ENCODE measurements at regions of chr3 and their contacts with region 1.

Region 1: GRCh38 chr3:132722164-132723024 is at the start of gene NPHP3:
- DNase-seq: peak; percentile 87 to 95 (median 91)
- H3K4me3 ChIP-seq: peak within 1 kb of the TSS; percentile 44 to 81
- H3K4me3 Mint-ChIP-seq: peak within 1 kb of the TSS; percentile 90 to 96 (median 92)
- H3K27ac ChIP-seq: peak within 1 kb of the TSS; percentile 80
- H3K27ac Mint-ChIP-seq: peak within 1 kb of the TSS; percentile 79 to 94 (median 91)
- H3K4me1 ChIP-seq: peaks cover 30% of the 10 kb centered on the region
- H3K4me1 Mint-ChIP-seq: peaks cover 29 to 49% (median 41%) of the 10 kb centered on the region in 4 donors
- H3K27me3 ChIP-seq: no peaks in the 10 kb centered on the region
- H3K27me3 Mint-ChIP-seq: peaks cover 0 to 1% of the 10 kb centered on the region in 2 donors
- total RNA-seq, gene NPHP3: 68.0 to 72.9 TPM

Region 2: DNA sequence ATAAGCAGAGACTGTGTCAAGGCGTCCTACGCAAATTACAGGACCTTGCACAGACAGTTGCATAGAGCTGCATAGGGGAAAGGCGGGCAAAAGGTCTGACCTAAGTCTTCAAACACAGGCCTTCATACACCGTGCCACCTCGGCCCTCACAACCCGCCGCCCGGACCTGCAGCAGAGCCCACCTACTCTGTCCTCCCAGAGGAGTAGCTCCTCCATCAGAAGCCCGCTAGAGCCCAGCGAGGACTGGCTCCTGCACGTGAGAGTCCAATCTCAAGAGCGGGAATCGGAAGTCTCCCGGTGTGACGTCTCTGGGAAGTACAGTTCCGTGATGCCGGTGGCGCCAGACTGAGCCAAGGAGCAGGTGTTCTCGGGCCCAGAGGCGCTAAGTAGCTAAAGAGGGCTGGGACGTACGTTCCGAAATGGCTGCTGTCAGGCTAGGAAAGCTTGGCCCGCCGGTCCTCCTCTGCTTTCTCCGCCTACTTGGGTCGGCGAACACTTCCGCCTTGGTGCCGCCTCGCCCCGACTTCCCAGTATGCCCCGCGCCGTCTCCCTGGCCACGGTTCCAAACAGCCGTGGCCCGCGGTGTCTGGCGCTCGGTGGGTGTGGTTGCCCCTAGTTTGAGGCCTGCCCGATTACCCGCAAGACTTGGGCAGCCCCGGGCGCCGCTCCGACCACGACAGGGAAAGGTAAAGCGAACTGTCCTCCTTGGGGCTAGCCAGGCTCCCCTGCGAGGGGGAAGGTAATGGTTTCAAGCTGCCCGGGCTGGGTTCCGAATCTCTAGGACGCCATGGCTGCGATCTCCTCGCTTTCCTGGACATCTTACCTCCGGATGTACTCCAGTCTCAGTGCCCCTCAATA is 1695.8 kb before region 1 on chr3 and contains the starts of genes ASTE1 and NEK11:
- CTCF ChIA-PET with region 1: no interaction called
- POLR2A ChIA-PET with region 1: no interaction called
- intact Hi-C with region 1: loop called (anchors 2 kb)
- DNase-seq: peak; percentile 93 to 95 (median 94)
- H3K4me3 ChIP-seq: peak within 1 kb of the TSS; percentile 76 to 95
- H3K4me3 Mint-ChIP-seq: peak within 1 kb of the TSS; percentile 87 to 95 (median 94)
- H3K27ac ChIP-seq: peak within 1 kb of the TSS; percentile 90
- H3K27ac Mint-ChIP-seq: peak within 1 kb of the TSS; percentile 92 to 99 (median 98)
- H3K4me1 ChIP-seq: peaks cover 51% of the 10 kb centered on the region
- H3K4me1 Mint-ChIP-seq: peaks cover 39 to 60% (median 49%) of the 10 kb centered on the region in 4 donors
- H3K27me3 ChIP-seq: no peaks in the 10 kb centered on the region
- H3K27me3 Mint-ChIP-seq: no peaks in the 10 kb centered on the region
- total RNA-seq, gene ASTE1: 28.1 TPM
- total RNA-seq, gene NEK11: 5.3 to 6.2 TPM

Region 3: GRCh38 chr3:132343018-132343612 is 379.3 kb before region 1 on chr3:
- CTCF ChIA-PET with region 1: no interaction called
- POLR2A ChIA-PET with region 1: no interaction called
- intact Hi-C with region 1: no loop called
- DNase-seq: peak; percentile 10 to 45 (median 16)
- H3K4me3 ChIP-seq: no peak overlapping the region
- H3K4me3 Mint-ChIP-seq: peak overlapping the region in 2 of 8 donors; percentile 10 to 23
- H3K27ac ChIP-seq: no peak overlapping the region
- H3K27ac Mint-ChIP-seq: no peak overlapping the region
- H3K4me1 ChIP-seq: no peaks in the 10 kb centered on the region
- H3K4me1 Mint-ChIP-seq: peaks cover 0 to 3% (median 3%) of the 10 kb centered on the region in 4 donors
- H3K27me3 ChIP-seq: no peaks in the 10 kb centered on the region
- H3K27me3 Mint-ChIP-seq: peaks cover 4 to 7% of the 10 kb centered on the region in 2 donors

Region 4: DNA sequence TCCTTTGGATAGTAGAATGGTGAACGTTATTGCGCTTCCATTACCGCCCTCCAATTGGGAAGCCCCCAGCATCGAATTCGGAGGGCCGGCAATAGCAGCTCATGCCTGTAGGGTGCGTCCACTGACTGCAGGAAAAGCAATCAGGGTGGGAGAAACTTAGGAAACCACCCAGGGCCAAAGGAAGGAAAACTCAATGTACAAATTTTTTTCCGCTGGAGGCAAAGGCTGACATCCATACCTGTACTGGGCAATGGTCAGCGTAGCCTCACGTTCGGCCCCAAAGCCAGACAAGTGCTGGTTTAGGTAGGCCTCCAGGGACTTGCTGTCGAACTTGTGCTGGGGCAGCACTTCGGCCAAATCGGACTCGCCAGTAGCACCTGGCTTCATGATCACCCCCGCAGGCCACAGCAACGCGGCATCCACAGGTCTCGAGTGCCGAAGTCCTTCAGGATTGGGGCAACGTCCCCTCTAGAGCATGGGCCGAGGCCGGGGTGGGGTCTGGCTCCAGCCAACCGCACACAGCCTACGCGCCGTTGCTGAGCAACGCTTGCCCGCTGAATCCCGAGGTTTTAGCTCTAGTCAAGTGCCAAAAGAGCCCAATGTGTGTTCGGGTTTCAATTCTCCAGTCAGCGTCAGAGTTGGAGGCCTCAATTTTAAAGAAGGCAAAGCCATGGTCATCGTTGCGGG is 62.9 kb before region 1 on chr3 and contains the start of gene ACAD11:
- CTCF ChIA-PET with region 1: no interaction called
- POLR2A ChIA-PET with region 1: interaction called, 4 read pairs
- intact Hi-C with region 1: loop called (anchors 2 kb)
- DNase-seq: peak; percentile 11 to 48 (median 13)
- H3K4me3 ChIP-seq: peak within 1 kb of the TSS; percentile 78 to 99
- H3K4me3 Mint-ChIP-seq: peak within 1 kb of the TSS; percentile 96 to 99 (median 98)
- H3K27ac ChIP-seq: peak within 1 kb of the TSS; percentile 83
- H3K27ac Mint-ChIP-seq: peak within 1 kb of the TSS; percentile 95 to 98 (median 97)
- H3K4me1 ChIP-seq: peaks cover 53% of the 10 kb centered on the region
- H3K4me1 Mint-ChIP-seq: peaks cover 37 to 71% (median 48%) of the 10 kb centered on the region in 4 donors
- H3K27me3 ChIP-seq: no peaks in the 10 kb centered on the region
- H3K27me3 Mint-ChIP-seq: no peaks in the 10 kb centered on the region
- total RNA-seq, gene ACAD11: 21.6 to 26.9 TPM

Region 5: GRCh38 chr3:133448478-133449122 is 726.2 kb after region 1 on chr3:
- CTCF ChIA-PET with region 1: interaction called, 4 read pairs
- POLR2A ChIA-PET with region 1: no interaction called
- intact Hi-C with region 1: loop called (anchors 5 kb)
- DNase-seq: peak; percentile 22 to 56 (median 32)
- H3K4me3 ChIP-seq: no peak overlapping the region
- H3K4me3 Mint-ChIP-seq: peak overlapping the region in 7 of 8 donors; percentile 13 to 81 (median 60)
- H3K27ac ChIP-seq: no peak overlapping the region
- H3K27ac Mint-ChIP-seq: peak overlapping the region; percentile 57 to 96 (median 89)
- H3K4me1 ChIP-seq: peaks cover 21% of the 10 kb centered on the region
- H3K4me1 Mint-ChIP-seq: peaks cover 19 to 38% (median 27%) of the 10 kb centered on the region in 4 donors
- H3K27me3 ChIP-seq: no peaks in the 10 kb centered on the region
- H3K27me3 Mint-ChIP-seq: no peaks in the 10 kb centered on the region

Region 6: DNA sequence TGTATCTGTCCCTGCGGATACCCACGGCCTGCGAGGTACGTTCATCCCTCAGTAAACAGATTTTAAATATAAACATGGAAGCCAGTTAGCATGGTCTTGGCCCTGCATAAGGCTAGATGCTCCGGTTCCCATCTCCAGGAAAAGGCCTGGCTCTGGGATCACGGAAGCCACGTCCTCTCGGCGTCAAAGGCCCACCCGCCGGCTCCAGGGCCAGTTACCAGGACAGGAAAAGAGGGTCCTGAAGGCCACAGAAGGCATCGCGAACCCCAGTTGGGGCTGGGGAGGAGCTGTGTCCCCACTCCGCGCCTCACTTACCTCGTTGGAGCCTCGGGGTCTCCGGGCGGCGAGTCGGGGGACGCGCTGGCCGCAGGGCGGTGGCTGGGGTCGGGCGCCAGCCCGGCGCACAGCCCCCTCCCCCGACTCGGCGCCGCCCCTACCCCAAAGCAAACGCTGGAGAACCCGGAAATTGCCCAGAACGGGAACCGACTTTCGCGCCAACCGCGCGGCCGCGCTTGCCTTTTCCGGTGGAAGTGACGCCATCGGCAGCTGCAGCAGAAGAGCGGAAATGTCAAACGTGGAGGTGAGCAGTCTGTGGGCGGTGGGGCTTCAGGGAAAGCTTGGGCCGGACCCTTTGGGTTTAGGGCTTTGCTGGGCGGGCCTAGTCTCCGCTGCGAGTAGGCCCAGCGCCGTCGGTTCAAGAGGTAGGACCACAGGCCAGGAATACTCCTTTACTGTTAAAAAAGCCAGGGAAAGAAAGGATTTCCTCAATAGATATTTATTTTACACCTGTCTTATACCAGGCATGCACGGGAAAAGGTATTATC is 939.3 kb after region 1 on chr3 and contains the start of gene TOPBP1:
- CTCF ChIA-PET with region 1: no interaction called
- POLR2A ChIA-PET with region 1: no interaction called
- intact Hi-C with region 1: loop called (anchors 2 kb)
- DNase-seq: peak; percentile 81 to 90 (median 85)
- H3K4me3 ChIP-seq: peak within 1 kb of the TSS; percentile 78 to 99
- H3K4me3 Mint-ChIP-seq: peak within 1 kb of the TSS; percentile 98 to 99 (median 98)
- H3K27ac ChIP-seq: peak within 1 kb of the TSS; percentile 81
- H3K27ac Mint-ChIP-seq: peak within 1 kb of the TSS; percentile 98 to 99 (median 99)
- H3K4me1 ChIP-seq: peaks cover 32% of the 10 kb centered on the region
- H3K4me1 Mint-ChIP-seq: peaks cover 29 to 52% (median 40%) of the 10 kb centered on the region in 4 donors
- H3K27me3 ChIP-seq: no peaks in the 10 kb centered on the region
- H3K27me3 Mint-ChIP-seq: no peaks in the 10 kb centered on the region
- total RNA-seq, gene TOPBP1: 42.0 to 43.2 TPM

Region 7: DNA sequence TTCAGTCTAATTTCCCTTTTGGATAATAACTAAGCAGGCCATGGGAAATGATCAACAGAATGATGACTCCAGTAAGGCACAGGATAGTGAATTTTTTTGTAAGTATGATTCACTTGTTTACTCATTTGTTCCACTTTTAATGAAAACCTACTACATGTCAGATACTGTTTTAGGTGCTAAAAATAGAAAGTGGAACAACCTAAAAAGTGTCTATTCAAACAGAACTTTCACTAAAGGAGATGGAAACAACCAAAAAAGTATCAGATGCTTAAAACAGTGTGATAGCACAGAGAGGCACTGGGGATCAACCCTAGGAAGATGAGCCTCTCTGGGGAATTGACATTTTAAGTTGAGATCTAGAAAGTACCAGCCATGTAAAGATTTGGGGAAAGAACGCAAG is 1517.1 kb after region 1 on chr3:
- CTCF ChIA-PET with region 1: no interaction called
- POLR2A ChIA-PET with region 1: no interaction called
- intact Hi-C with region 1: loop called (anchors 10 kb)
- DNase-seq: no peak
- H3K4me3 ChIP-seq: no peak overlapping the region
- H3K4me3 Mint-ChIP-seq: peak overlapping the region in 2 of 8 donors; percentile 37 to 56
- H3K27ac ChIP-seq: no peak overlapping the region
- H3K27ac Mint-ChIP-seq: peak overlapping the region in 3 of 7 donors; percentile 3 to 68 (median 26)
- H3K4me1 ChIP-seq: peaks cover 61% of the 10 kb centered on the region
- H3K4me1 Mint-ChIP-seq: peaks cover 58 to 87% (median 72%) of the 10 kb centered on the region in 4 donors
- H3K27me3 ChIP-seq: no peaks in the 10 kb centered on the region
- H3K27me3 Mint-ChIP-seq: no peaks in the 10 kb centered on the region

Measured in CD4-positive, alpha-beta memory T cell (primary cell).